Left colon (tissue), 2 donors: ENCODE measurements at regions of chr6 and their contacts with region 1.

Region 1: DNA sequence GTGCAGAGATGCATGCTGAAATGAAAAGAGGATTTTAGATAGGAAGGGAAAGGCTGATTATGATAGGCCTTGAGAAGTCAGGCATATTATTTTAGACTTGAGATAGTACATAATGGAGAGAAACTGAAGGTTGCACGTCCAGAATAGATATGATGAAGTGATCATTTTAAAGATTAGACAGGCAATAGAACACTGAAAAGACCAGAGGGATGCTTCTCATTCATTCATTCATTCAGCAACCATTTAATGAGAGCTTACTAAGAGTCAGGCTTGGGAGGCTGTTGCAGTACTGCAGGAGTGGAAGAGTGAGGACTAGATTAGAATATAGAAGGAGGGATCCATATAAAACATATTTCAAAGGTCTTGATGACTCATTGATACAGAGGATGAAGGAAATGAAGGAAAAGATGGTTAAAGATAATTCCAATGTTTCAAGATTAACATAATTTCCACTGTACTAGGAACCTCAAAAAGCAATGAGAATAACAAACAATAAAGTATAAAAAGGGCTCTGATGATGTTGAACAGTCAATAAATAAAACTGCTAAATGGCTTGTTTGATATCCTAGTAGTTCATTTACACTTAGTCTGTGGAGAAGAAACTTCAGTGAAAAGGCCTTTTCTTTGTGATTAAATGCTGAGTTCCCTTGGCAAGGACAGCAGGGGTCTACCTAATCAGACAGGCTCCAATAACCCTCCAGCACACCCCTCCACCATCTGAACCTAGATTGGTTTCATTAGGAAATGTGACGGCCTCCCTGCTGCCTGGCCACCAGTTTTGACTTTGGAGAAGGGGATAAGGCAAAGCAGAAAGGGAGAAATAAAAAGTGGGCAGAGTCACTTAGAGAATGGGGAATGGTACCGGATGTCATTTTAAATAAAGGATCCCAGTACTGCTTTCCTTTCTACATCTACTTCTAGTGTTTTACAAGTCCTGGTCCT is 5.3 kb upstream of the FBXO9 start:
- DNase-seq: no peak
- ATAC-seq: no peak

Region 2: DNA sequence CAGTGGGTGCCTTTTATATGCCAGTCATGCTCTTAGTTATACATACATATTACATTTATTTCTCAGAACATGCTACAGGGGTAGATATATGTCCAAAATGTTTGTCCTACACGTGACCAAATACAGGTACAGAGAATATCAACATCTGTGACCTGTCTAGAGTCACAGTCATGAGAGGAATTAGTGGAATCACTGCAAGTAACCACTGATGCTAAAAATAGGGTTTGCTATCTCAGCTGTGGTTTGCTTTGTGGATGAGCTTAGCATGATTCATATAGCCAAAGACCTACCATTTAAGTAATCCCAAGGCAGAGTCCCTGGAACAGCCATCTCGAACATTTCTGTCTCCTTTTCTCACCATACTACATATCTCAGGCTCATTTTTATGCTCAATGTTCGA is 182.8 kb before region 1 on chr6:
- intact Hi-C with region 1: loop called in 1 of 2 experiments (anchors 10 kb)
- DNase-seq: no peak
- ATAC-seq: no peak

Region 3: DNA sequence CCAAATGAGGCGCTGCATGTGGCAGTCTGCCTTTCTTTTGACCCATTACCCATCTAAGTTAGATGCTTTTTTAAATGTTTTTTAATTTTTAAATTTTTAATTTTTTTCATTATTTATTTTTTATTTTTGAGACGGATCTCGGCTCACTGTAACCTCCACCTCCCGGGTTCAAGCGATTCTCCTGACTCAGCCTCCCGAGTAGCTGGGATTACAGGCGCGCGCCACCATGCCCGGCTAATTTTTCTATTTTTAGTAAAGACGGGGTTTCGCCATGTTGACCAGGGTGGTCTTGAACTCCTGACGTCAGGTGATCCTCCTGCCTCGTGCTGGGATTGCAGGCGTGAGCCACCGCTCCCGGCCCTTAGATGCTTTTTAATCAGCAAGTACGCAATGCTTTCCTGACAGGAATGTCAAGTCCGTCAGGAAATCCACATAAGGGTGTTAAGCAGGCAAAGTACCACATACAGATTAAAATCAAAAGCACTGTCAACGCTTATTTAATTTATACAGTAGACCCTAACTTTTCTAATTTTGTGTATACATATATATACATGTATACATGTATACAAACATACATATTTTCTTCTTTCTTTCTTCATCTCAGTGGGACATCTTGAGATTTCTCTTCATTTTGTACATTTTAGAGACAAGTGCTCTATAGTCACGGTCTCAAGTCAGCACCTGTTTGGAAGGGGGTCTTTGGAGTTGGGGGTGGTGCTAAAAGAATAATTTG is 63.8 kb before region 1 on chr6:
- intact Hi-C with region 1: loop called in 1 of 2 experiments (anchors 5 kb)
- DNase-seq: peak; percentile 36 to 38
- ATAC-seq: no peak